ENCODE measurements at regions of chr5 and their contacts with region 1.

Region 1: DNA sequence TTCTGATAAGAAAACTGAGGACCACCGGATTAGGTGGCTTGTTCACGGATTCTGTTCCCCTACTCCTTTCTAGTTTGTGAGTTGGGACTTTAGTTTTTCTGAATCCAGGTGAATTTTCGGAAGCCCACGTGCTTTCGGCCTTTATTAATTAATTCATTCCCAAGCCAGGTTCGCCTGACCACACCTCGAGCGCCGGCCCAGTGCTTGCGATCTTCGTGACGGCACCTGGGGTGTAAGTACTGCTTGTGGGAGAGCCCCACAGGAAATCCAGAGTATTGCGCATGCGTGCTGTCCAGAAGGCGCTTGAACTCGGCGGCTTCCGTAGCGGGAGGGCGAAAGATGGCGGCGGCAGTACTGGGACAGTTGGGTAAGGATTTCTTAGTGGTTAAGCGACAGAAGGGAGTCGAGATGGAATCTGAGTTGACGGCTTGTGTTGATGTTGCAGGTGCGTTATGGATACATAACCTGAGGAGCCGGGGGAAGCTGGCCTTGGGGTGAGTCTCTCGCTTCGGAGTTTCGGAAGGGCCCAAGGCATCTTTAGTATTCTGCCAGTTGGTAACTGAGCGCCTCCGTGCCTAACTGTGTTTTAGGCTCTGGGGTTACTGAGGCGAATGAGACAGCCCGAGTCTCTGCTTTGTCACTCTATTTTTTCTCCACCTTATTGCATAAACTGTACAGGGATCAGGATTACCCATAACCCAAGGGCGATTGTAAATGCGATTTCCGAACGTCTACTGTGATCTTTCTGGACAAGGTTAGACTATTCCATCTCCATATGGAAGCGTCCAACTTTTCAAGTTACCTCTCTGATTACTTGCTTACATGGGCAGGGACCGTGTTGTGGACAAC is at the start of gene MRPL22:
- DNase-seq: peak; percentile 89 to 98 (median 94)
- ATAC-seq: peak; percentile 79
- H3K4me3 ChIP-seq: peak within 1 kb of the TSS; percentile 94
- H3K4me3 Mint-ChIP-seq: peak within 1 kb of the TSS; percentile 99
- H3K27ac ChIP-seq: peak within 1 kb of the TSS; percentile 68 to 75
- H3K27ac Mint-ChIP-seq: peak within 1 kb of the TSS; percentile 97
- H3K4me1 ChIP-seq: peaks cover 44% of the 10 kb centered on the region
- H3K4me1 Mint-ChIP-seq: peaks cover 52% of the 10 kb centered on the region
- H3K27me3 ChIP-seq: no peaks in the 10 kb centered on the region
- H3K27me3 Mint-ChIP-seq: no peaks in the 10 kb centered on the region
- CTCF ChIP-seq: no peak
- total RNA-seq, gene MRPL22: 29.9 to 30.2 TPM

Region 2: GRCh38 chr5:154445422-154446182 is 495.4 kb before region 1 on chr5 and contains the start of gene SAP30L:
- CTCF ChIA-PET with region 1: no interaction called
- POLR2A ChIA-PET with region 1: no interaction called
- intact Hi-C with region 1: loop called in 1 of 2 experiments (anchors 5 kb)
- DNase-seq: peak; percentile 90 to 97 (median 94)
- ATAC-seq: peak; percentile 94
- H3K4me3 ChIP-seq: peak within 1 kb of the TSS; percentile 79
- H3K4me3 Mint-ChIP-seq: peak within 1 kb of the TSS; percentile 97
- H3K27ac ChIP-seq: peak within 1 kb of the TSS; percentile 42 to 73
- H3K27ac Mint-ChIP-seq: peak within 1 kb of the TSS; percentile 89
- H3K4me1 ChIP-seq: peaks cover 38% of the 10 kb centered on the region
- H3K4me1 Mint-ChIP-seq: peaks cover 69% of the 10 kb centered on the region
- H3K27me3 ChIP-seq: no peaks in the 10 kb centered on the region
- H3K27me3 Mint-ChIP-seq: no peaks in the 10 kb centered on the region
- CTCF ChIP-seq: no peak
- total RNA-seq, gene SAP30L: 32.2 to 33.6 TPM

Region 3: GRCh38 chr5:154683101-154683880 is 257.7 kb before region 1 on chr5:
- CTCF ChIA-PET with region 1: no interaction called
- POLR2A ChIA-PET with region 1: no interaction called
- intact Hi-C with region 1: no loop called
- DNase-seq: peak in 1 of 14 experiments; percentile 23
- ATAC-seq: peak; percentile 31
- H3K4me3 ChIP-seq: peak overlapping the region; percentile 67
- H3K4me3 Mint-ChIP-seq: peak overlapping the region; percentile 32
- H3K27ac ChIP-seq: no peak overlapping the region
- H3K27ac Mint-ChIP-seq: no peak overlapping the region
- H3K4me1 ChIP-seq: peaks cover 17% of the 10 kb centered on the region
- H3K4me1 Mint-ChIP-seq: peaks cover 8% of the 10 kb centered on the region
- H3K27me3 ChIP-seq: peaks cover 0 to 5% of the 10 kb centered on the region in 2 experiments
- H3K27me3 Mint-ChIP-seq: no peaks in the 10 kb centered on the region
- CTCF ChIP-seq: no peak

Region 4: DNA sequence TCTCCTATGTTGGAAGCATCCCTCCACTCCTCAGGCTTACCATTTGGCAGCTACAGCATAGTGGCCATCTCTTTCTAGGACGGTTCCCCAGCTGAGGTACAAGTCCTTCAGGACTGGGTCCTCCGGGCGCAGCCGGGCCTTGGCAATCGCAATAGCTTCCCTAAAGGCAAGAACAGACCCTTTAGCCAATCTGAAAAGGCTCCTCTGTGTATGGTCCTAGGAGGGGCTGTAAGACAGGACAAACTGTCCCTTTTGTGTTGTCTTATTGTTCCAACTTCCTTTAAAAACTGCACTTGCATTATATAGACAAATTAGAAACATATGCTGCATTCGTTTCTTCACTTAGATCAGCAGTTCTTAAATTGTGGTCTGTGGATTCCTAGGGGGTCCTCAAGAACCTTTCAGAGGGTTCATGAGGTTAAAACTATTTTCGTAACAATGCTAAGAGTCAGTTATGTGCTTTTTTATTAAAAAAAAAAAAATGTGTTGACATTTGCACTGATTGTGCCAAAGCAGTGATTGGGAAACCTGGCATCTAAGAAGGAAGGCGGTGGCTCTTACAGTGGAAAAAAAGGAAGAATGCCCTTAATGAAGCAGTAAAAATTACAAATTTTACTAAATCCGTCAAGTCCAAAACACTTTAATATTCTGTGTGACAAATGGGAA is 41.7 kb before region 1 on chr5:
- CTCF ChIA-PET with region 1: no interaction called
- POLR2A ChIA-PET with region 1: no interaction called
- intact Hi-C with region 1: no loop called
- DNase-seq: no peak
- ATAC-seq: no peak
- H3K4me3 ChIP-seq: no peak overlapping the region
- H3K4me3 Mint-ChIP-seq: no peak overlapping the region
- H3K27ac ChIP-seq: no peak overlapping the region
- H3K27ac Mint-ChIP-seq: no peak overlapping the region
- H3K4me1 ChIP-seq: no peaks in the 10 kb centered on the region
- H3K4me1 Mint-ChIP-seq: no peaks in the 10 kb centered on the region
- H3K27me3 ChIP-seq: no peaks in the 10 kb centered on the region
- H3K27me3 Mint-ChIP-seq: no peaks in the 10 kb centered on the region
- CTCF ChIP-seq: no peak